Gastrocnemius medialis (tissue), 4 donors: ENCODE measurements at regions of chr3 and their contacts with region 1.

Region 1: GRCh38 chr3:45037734-45038455 is 11.8 kb downstream of the CLEC3B start:
- DNase-seq: peak; percentile 87 to 93
- ATAC-seq: peak; percentile 88 to 91
- H3K4me3 ChIP-seq: no peak overlapping the region
- H3K27ac ChIP-seq: peak overlapping the region in 3 of 4 donors; percentile 13 to 53 (median 30)
- H3K4me1 ChIP-seq: peaks cover 0 to 22% of the 10 kb centered on the region in 2 donors
- H3K27me3 ChIP-seq: no peaks in the 10 kb centered on the region
- CTCF ChIP-seq: peak; percentile 92 to 98 (median 93)
- POLR2A ChIP-seq: no peak

Region 2: DNA sequence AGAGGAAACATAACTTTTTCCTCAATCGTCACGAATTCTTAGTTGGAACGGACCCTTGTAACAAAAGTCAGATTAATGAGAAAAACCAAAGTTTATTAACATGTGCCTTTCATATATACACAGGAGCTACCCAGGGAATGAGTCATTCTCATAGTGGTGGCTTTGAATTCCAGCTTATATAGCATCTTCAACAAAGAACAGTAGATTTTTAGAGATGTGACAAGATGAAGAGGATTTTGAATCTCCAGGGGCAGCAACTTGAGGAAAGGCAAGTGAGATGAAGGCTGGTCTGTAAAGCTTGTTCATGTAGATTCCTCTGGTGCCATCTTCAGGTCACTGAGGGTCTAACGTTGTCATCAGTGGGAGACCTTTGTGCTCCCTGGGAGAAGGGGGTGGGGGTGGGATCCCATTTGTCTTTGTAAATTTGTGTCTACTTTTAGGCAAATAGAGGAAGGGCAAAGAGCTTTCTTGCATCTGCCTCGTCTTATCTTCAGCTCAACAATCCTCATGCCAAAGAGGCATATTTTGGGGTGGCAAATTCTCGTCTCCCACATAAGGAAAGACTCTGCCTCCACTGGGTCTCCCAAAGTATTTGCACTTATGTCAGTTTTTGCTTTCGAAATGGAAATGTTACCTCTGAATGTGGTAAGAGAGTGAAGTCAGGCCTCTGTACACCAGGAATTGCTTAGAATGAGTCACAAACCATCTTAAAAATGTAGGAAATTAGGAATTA is 17.7 kb after region 1 on chr3:
- in situ Hi-C with region 1: no loop called
- intact Hi-C with region 1: loop called (anchors 1 kb)
- DNase-seq: no peak
- ATAC-seq: peak in 1 of 2 donors; percentile 49
- H3K4me3 ChIP-seq: no peak overlapping the region
- H3K27ac ChIP-seq: peak overlapping the region in 3 of 4 donors; percentile 31 to 86 (median 74)
- H3K4me1 ChIP-seq: peaks cover 28 to 37% of the 10 kb centered on the region in 2 donors
- H3K27me3 ChIP-seq: no peaks in the 10 kb centered on the region
- CTCF ChIP-seq: peak in 2 of 5 experiments; percentile 25 to 39
- POLR2A ChIP-seq: no peak

Region 3: GRCh38 chr3:45210308-45211041 is 172.6 kb after region 1 on chr3:
- in situ Hi-C with region 1: loop called in 3 of 4 experiments (anchors 5 kb)
- intact Hi-C with region 1: loop called (anchors 1 kb)
- DNase-seq: peak; percentile 74 to 80
- ATAC-seq: peak; percentile 94
- H3K4me3 ChIP-seq: no peak overlapping the region
- H3K27ac ChIP-seq: no peak overlapping the region
- H3K4me1 ChIP-seq: peaks cover 7 to 8% of the 10 kb centered on the region in 2 donors
- H3K27me3 ChIP-seq: no peaks in the 10 kb centered on the region
- CTCF ChIP-seq: peak; percentile 87 to 94 (median 88)
- POLR2A ChIP-seq: no peak

Region 4: GRCh38 chr3:45499529-45499928 is 461.6 kb after region 1 on chr3:
- in situ Hi-C with region 1: loop called (anchors 5 to 25 kb)
- intact Hi-C with region 1: loop called (anchors 5 kb)
- DNase-seq: no peak
- ATAC-seq: no peak
- H3K4me3 ChIP-seq: no peak overlapping the region
- H3K27ac ChIP-seq: no peak overlapping the region
- H3K4me1 ChIP-seq: peaks cover 31% of the 10 kb centered on the region in 2 donors
- H3K27me3 ChIP-seq: no peaks in the 10 kb centered on the region
- CTCF ChIP-seq: peak in 4 of 5 experiments; percentile 18 to 56 (median 42)
- POLR2A ChIP-seq: no peak

Region 5: GRCh38 chr3:45656575-45657363 is 618.9 kb after region 1 on chr3:
- in situ Hi-C with region 1: loop called (anchors 25 kb)
- intact Hi-C with region 1: loop called (anchors 10 kb)
- DNase-seq: peak; percentile 85 to 95
- ATAC-seq: peak; percentile 78 to 82
- H3K4me3 ChIP-seq: no peak overlapping the region
- H3K27ac ChIP-seq: peak overlapping the region; percentile 71 to 82 (median 78)
- H3K4me1 ChIP-seq: peaks cover 44 to 48% of the 10 kb centered on the region in 2 donors
- H3K27me3 ChIP-seq: no peaks in the 10 kb centered on the region
- CTCF ChIP-seq: peak; percentile 96 to 97 (median 97)
- POLR2A ChIP-seq: no peak